Adrenal gland (tissue), 19 donors: ENCODE measurements at regions of chr21 and their contacts with region 1.

Region 1: GRCh38 chr21:29164325-29164942 is 34.0 kb downstream of the MAP3K7CL start:
- DNase-seq: peak in 2 of 7 donors; percentile 24 to 31
- H3K4me3 ChIP-seq: peak overlapping the region in 1 of 4 donors; percentile 30
- H3K27ac ChIP-seq: no peak overlapping the region
- H3K4me1 ChIP-seq: peaks cover 0 to 8% of the 10 kb centered on the region in 2 donors
- H3K27me3 ChIP-seq: no peaks in the 10 kb centered on the region
- CTCF ChIP-seq: peak; percentile 43 to 90 (median 81)
- POLR2A ChIP-seq: no peak

Region 2: DNA sequence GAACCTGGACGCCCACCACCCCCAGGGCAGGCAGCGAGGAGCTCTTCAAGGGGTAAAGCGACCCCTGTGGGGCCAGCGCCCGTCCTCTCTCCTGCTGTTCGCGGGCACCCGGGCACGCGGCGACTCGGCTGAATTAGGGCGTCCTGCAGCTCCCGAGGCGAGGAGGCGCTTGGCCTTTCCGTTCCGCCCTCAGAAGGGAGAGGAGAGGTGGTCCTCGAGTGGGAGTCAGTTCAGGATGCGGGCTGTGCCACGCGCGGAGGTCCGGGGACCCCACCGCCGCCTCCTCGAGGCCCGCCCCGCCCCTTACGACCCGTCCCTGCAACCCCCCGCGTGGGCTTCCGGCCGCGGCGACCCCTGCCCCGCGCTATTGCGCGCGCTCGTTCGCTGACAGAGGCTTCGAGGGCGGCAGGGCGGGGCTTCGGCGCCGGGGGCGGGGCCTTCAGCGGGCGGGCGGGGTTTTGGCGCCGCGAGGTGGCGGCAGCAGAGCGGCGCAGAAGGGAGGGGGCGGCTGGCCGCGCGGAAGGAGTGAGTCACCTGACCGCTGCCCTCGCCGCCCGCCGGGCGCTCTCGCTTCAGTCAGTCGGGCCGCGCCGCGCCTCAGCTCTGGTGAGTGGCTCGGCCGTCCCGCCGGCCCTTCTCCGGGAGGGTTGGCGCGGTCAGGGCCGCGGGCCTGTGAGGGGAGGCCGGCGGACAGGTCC is 134.1 kb after region 1 on chr21 and contains the start of gene BACH1:
- intact Hi-C with region 1: loop called in 1 of 2 experiments (anchors 10 kb)
- DNase-seq: peak; percentile 88 to 92 (median 91)
- H3K4me3 ChIP-seq: peak within 1 kb of the TSS; percentile 32 to 99 (median 86)
- H3K27ac ChIP-seq: peak within 1 kb of the TSS in 4 of 5 donors; percentile 68 to 99 (median 91)
- H3K4me1 ChIP-seq: peaks cover 16 to 45% of the 10 kb centered on the region in 2 donors
- H3K27me3 ChIP-seq: no peaks in the 10 kb centered on the region
- CTCF ChIP-seq: peak in 3 of 6 experiments; percentile 34 to 52 (median 45)
- POLR2A ChIP-seq: peak; percentile 84 to 95
- total RNA-seq, gene BACH1: 18.5 to 61.2 (median 46.2) TPM

Region 3: GRCh38 chr21:29372063-29372802 is 207.8 kb after region 1 on chr21:
- intact Hi-C with region 1: loop called in 1 of 2 experiments (anchors 5 kb)
- DNase-seq: peak; percentile 25 to 76 (median 70)
- H3K4me3 ChIP-seq: no peak overlapping the region
- H3K27ac ChIP-seq: no peak overlapping the region
- H3K4me1 ChIP-seq: no peaks in the 10 kb centered on the region
- H3K27me3 ChIP-seq: no peaks in the 10 kb centered on the region
- CTCF ChIP-seq: peak; percentile 71 to 89 (median 83)
- POLR2A ChIP-seq: no peak